Body of pancreas (tissue), 4 donors: ENCODE measurements at regions of chrX and their contacts with region 1.

Region 1: GRCh38 chrX:2819345-2820135 is 9.2 kb upstream of the GYG2 start:
- DNase-seq: peak in 1 of 4 donors; percentile 42
- ATAC-seq: no peak
- H3K4me3 ChIP-seq: no peak overlapping the region
- H3K27ac ChIP-seq: no peak overlapping the region
- H3K4me1 ChIP-seq: no peaks in the 10 kb centered on the region
- H3K27me3 ChIP-seq: no peaks in the 10 kb centered on the region
- CTCF ChIP-seq: peak; percentile 19 to 64 (median 42)
- POLR2A ChIP-seq: no peak

Region 2: DNA sequence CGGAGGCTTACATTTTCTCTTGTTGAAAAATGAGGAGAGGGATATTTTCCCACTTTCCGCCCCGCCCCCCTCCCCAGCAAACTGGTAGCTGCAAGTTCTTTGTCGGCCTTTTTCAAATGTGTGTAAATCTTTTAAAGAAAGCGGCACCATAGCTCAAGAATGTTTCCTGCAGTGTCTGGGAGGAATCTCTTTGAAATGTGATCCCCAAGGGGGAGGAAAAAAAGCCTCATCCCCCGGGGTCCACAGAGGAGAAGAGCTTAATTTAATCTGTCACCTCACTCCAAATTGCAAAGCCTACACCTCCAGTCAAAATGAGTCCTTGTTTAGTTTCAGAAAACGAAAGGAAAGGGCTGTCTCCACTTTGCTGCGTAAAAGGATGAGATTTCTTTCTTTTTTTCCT is 1169.9 kb before region 1 on chrX:
- intact Hi-C with region 1: loop called (anchors 5 kb)
- DNase-seq: no peak
- ATAC-seq: no peak
- H3K4me3 ChIP-seq: no peak overlapping the region
- H3K27ac ChIP-seq: no peak overlapping the region
- H3K4me1 ChIP-seq: no peaks in the 10 kb centered on the region
- H3K27me3 ChIP-seq: no peaks in the 10 kb centered on the region
- CTCF ChIP-seq: no peak
- POLR2A ChIP-seq: no peak